GM12878 (cell line): ENCODE measurements at regions of chr17 and their contacts with region 1.

Region 1: DNA sequence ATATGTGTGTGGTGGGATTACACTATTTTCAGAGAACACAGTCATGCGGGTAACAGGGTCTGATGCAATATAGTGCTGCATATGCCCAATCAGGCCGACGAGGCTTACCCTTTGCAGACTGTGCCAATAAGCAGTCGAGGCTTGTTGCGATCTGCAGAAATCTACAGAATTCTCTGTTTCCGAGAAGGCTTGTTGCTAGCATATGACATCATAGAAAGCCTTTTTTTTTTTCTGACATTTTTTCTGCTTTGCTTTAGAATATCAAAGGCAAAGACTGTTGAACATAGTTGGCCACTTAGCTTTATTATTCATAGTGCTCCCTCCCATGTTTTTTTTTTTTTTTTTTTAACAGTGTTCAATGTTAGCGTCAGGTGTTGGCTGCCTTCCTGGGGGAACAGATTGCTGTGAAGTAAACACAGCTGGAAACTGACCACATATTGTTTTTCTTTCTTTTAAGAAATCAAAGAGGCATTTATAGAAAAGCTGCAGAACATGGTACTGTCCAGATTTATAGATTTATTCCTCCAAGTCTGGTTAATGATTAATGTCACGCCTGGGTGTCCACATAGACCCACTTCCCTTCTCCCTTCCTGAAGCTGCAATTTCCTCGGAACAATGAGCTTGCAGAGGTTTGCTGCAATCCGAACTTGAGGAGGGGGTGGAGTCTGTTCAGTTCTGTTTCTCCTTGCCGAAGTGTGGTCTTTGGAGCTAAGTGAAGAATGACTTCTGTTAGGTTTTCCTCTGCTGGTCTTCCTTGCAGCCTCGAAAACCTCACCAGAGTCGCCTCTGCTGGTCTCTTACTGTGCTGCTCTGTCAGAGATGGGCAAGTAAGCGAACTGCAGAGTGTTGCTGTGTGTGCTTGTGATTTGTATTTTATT is 87.3 kb downstream of the MAP2K6 start:
- DNase-seq: no peak
- ATAC-seq: peak; percentile 54
- H3K4me3 ChIP-seq: peak overlapping the region; percentile 70
- H3K27ac ChIP-seq: peak overlapping the region; percentile 88
- H3K4me1 ChIP-seq: peaks cover 25% of the 10 kb centered on the region
- H3K27me3 ChIP-seq: no peaks in the 10 kb centered on the region
- CTCF ChIP-seq: 0 out of 6 replicates have a peak, but pooled peaks of 1 of the 3 experiments have one; percentile 8
- EP300 ChIP-seq: 0 out of 4 replicates have a peak, but pooled peaks of 1 of the 2 experiments have one; percentile 18
- POLR2A ChIP-seq: no peak
- RAD21 ChIP-seq: no peak

Region 2: GRCh38 chr17:69414408-69415274 is 87.2 kb before region 1 on chr17 and contains the start of gene MAP2K6:
- CTCF ChIA-PET with region 1: interaction called, 5 read pairs
- POLR2A ChIA-PET with region 1: no interaction called
- RAD21 ChIA-PET with region 1: no interaction called
- SMC1A ChIA-PET with region 1: interaction called, 13 read pairs
- in situ Hi-C with region 1: no loop called
- intact Hi-C with region 1: loop called (anchors 2 kb)
- DNase-seq: peak; percentile 60
- ATAC-seq: peak; percentile 97
- H3K4me3 ChIP-seq: peak within 1 kb of the TSS; percentile 69
- H3K27ac ChIP-seq: peak within 1 kb of the TSS; percentile 45
- H3K4me1 ChIP-seq: no peaks in the 10 kb centered on the region
- H3K27me3 ChIP-seq: no peaks in the 10 kb centered on the region
- CTCF ChIP-seq: no peak
- EP300 ChIP-seq: peak in 1 of 2 experiments; percentile 62; a peak in 1 of 4 replicates
- POLR2A ChIP-seq: peak; percentile 62
- RAD21 ChIP-seq: no peak
- polyA plus RNA-seq, gene MAP2K6: 61.4 to 70.3 TPM

Region 3: GRCh38 chr17:69592692-69593350 is 91.0 kb after region 1 on chr17:
- CTCF ChIA-PET with region 1: no interaction called
- POLR2A ChIA-PET with region 1: no interaction called
- RAD21 ChIA-PET with region 1: no interaction called
- SMC1A ChIA-PET with region 1: no interaction called
- in situ Hi-C with region 1: no loop called
- intact Hi-C with region 1: no loop called
- DNase-seq: no peak
- ATAC-seq: no peak
- H3K4me3 ChIP-seq: no peak overlapping the region
- H3K27ac ChIP-seq: no peak overlapping the region
- H3K4me1 ChIP-seq: no peaks in the 10 kb centered on the region
- H3K27me3 ChIP-seq: peaks cover 0 to 2% of the 10 kb centered on the region in 2 experiments; a peak in 3 of 4 replicates
- CTCF ChIP-seq: no peak
- EP300 ChIP-seq: no peak
- POLR2A ChIP-seq: no peak
- RAD21 ChIP-seq: no peak